ENCODE measurements at regions of chr10 and their contacts with region 1.

Region 1: DNA sequence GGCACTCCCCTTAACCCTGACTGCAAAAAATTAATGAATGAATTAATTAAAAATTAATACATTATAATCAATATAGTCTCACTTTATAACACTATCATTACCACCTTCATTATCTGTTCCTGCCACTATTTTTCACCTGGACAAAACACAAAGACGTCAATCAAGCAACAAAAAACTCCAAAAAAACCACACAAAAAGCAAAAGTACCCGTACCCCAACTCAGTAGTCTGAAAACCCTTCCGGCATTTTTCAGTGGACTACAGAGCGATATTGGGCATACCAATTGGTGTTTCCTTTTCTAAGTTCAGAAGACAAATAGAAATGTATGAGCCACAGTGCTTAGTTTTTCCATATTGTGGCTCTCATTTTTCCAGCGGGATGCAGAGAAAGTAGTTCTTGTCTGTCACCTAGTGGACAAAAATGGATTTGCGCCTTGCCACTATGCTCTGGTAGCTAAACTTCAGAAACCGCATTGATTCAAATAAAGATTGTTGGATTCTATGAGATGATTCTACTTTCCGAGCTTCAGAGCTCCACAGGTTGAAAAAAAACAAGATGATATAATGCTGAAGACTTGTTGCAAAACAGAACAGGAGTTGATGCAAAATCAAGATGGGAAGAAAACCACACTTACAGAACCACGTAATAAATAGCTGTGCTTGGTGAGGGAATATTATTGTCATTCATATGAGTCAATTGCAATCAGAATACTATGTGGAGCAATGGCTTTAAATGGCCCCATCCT is 50.6 kb upstream of the ITGB1 start:
- DNase-seq: peak; percentile 84
- H3K4me3 Mint-ChIP-seq: peak overlapping the region; percentile 35
- H3K27ac Mint-ChIP-seq: peak overlapping the region; percentile 29
- H3K4me1 Mint-ChIP-seq: peaks cover 33% of the 10 kb centered on the region
- H3K27me3 Mint-ChIP-seq: no peaks in the 10 kb centered on the region
- CTCF ChIP-seq: peak; percentile 98

Region 2: DNA sequence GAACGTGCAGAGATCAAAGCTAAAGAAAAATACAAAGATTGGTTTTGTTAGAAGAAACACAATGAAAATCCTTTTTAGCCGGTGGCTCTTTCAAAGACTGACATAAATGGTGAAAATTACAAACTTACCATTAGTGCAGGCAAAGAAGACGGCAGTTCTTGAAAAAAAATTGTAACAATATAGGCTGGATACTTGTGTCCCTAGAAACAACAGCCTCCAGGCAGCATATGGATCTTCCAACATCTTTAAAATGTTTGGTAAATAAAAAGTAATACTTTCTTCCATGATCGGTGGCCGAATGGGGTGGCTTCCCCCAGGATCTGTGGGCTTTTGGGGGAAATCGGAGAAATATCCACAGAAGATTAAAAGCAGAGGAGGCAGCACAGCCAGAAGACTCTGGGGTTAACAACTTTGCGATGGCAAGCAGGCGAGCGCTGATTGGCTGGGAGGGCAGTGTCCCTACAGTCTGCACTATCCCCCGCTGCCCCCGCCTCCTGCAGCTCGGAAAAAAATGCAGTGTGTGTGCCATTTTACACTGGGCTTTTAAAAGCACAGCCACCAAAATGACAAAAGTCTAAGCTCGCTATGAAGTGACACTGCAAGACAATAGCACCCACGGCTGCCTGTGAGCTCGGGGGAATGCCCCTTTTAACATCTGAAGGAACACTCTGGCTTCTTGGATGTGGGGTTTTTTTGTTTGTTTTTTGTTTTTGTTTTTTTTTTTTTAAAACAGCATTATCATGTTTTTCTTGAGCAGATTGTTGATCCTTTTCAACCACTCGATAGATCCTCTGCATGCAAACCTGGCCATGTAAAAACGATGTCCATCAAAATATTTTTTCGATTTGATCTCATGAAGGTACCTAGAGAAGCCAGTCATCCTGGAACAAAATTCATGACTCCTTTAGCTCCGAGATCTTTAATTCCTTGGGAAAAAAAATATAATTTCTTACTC is 630.0 kb before region 1 on chr10:
- CTCF ChIA-PET with region 1: no interaction called
- POLR2A ChIA-PET with region 1: interaction called, 4 read pairs
- intact Hi-C with region 1: loop called (anchors 10 kb)
- DNase-seq: peak; percentile 91
- H3K4me3 Mint-ChIP-seq: no peak overlapping the region
- H3K27ac Mint-ChIP-seq: no peak overlapping the region
- H3K4me1 Mint-ChIP-seq: peaks cover 9% of the 10 kb centered on the region
- H3K27me3 Mint-ChIP-seq: no peaks in the 10 kb centered on the region
- CTCF ChIP-seq: no peak

Region 3: GRCh38 chr10:32795598-32796183 is 213.0 kb before region 1 on chr10:
- CTCF ChIA-PET with region 1: interaction called, 11 read pairs
- POLR2A ChIA-PET with region 1: no interaction called
- intact Hi-C with region 1: loop called (anchors 1 kb)
- DNase-seq: peak; percentile 43
- H3K4me3 Mint-ChIP-seq: no peak overlapping the region
- H3K27ac Mint-ChIP-seq: no peak overlapping the region
- H3K4me1 Mint-ChIP-seq: no peaks in the 10 kb centered on the region
- H3K27me3 Mint-ChIP-seq: no peaks in the 10 kb centered on the region
- CTCF ChIP-seq: peak; percentile 67

Region 4: DNA sequence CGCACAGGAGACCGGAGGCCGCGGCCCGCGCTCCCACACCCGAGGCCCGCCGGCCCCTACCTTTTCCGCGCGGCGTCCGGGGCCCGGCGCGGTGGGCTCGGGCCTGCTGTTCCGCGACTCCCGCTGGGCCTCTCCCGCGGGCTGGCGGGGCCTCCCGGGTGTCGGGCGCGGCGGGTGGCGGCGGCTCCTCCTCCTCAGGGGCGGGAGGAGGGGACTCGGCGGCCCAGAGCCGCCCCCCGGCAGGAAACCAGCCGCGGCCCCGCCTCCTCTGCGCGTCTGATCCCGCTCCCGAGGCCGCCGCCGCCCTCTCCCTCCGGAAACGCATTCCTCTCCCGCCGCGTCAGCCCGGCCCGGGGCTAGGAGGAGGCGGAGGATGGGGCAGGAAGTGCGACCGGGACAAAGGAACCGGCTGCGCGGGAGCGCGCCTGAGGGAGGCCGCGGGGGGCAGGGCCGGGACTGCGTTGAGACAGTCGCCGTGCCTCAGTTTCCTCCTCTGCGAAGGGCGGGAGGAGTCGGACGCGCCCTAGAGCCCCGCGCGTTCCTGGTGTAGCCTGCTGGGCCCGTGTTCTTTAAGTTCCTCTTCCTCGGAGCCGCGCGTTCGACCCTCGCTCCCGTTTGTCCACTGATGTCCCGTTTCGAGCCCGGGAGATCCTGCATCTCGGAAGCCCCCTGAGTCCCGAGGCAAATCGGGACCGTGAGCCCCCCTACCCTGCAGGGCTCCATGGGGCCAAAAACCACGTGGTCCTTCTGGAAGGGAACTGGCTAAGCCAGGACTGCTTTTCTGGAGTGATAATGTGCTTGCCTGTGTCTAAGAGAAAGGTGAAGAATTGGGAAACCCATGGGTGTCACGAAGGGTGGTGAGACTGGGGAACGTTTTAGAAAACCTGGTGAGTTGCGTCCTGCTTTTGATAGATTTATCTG is 50.3 kb before region 1 on chr10 and contains the start of gene ITGB1:
- CTCF ChIA-PET with region 1: interaction called, 7 read pairs
- POLR2A ChIA-PET with region 1: interaction called, 81 read pairs
- intact Hi-C with region 1: loop called (anchors 1 kb)
- DNase-seq: peak; percentile 97
- H3K4me3 Mint-ChIP-seq: peak within 1 kb of the TSS; percentile 91
- H3K27ac Mint-ChIP-seq: peak within 1 kb of the TSS; percentile 100
- H3K4me1 Mint-ChIP-seq: peaks cover 30% of the 10 kb centered on the region
- H3K27me3 Mint-ChIP-seq: no peaks in the 10 kb centered on the region
- CTCF ChIP-seq: no peak
- total RNA-seq, gene ITGB1: 680 and 703 TPM in 2 replicates

Region 5: GRCh38 chr10:33155720-33156638 is 147.3 kb after region 1 on chr10:
- CTCF ChIA-PET with region 1: interaction called, 40 read pairs
- POLR2A ChIA-PET with region 1: interaction called, 4 read pairs
- intact Hi-C with region 1: loop called (anchors 1 kb)
- DNase-seq: peak; percentile 80
- H3K4me3 Mint-ChIP-seq: no peak overlapping the region
- H3K27ac Mint-ChIP-seq: no peak overlapping the region
- H3K4me1 Mint-ChIP-seq: peaks cover 20% of the 10 kb centered on the region
- H3K27me3 Mint-ChIP-seq: no peaks in the 10 kb centered on the region
- CTCF ChIP-seq: peak; percentile 61

Region 6: DNA sequence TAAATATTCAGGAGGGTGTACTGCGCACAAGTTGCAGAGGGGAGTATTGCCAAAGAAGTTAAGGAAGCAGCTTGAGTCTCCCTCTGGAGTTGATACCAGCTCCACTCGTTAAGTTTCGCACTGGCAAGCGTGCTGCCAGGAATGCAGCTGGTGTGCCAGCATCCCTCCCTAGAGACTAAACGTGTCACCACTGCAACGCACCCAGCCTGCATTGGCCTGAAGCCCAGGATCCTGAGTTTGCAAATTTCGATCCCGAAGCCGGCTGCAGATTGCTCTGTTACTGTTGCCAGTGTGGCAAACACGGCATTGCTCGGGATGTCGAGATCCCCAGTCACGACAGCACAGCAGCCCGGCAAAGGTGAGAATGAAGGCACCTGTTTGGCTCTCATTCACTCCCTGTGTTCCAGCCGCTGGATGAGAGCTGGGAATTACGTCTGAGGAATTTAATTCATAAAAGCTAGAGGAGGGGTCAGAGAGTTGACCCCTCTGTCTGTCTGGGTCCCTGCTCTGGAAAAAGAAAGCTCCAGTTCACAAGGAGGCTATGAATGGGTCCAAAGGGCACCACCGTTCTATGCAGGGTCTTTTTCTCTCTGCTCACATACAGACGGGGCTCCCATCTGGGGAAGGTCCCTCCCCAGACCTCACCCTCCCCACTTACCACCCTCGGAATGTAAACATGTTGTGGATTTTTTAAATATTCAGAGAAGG is 264.8 kb after region 1 on chr10:
- CTCF ChIA-PET with region 1: interaction called, 5 read pairs
- POLR2A ChIA-PET with region 1: no interaction called
- intact Hi-C with region 1: loop called (anchors 5 kb)
- DNase-seq: peak; percentile 98
- H3K4me3 Mint-ChIP-seq: peak overlapping the region; percentile 66
- H3K27ac Mint-ChIP-seq: peak overlapping the region; percentile 94
- H3K4me1 Mint-ChIP-seq: peaks cover 42% of the 10 kb centered on the region
- H3K27me3 Mint-ChIP-seq: no peaks in the 10 kb centered on the region
- CTCF ChIP-seq: no peak

Measured in MCF 10A (cell line).